Sigmoid colon (tissue), 7 donors: ENCODE measurements at regions of chr22 and their contacts with region 1.

Region 1: DNA sequence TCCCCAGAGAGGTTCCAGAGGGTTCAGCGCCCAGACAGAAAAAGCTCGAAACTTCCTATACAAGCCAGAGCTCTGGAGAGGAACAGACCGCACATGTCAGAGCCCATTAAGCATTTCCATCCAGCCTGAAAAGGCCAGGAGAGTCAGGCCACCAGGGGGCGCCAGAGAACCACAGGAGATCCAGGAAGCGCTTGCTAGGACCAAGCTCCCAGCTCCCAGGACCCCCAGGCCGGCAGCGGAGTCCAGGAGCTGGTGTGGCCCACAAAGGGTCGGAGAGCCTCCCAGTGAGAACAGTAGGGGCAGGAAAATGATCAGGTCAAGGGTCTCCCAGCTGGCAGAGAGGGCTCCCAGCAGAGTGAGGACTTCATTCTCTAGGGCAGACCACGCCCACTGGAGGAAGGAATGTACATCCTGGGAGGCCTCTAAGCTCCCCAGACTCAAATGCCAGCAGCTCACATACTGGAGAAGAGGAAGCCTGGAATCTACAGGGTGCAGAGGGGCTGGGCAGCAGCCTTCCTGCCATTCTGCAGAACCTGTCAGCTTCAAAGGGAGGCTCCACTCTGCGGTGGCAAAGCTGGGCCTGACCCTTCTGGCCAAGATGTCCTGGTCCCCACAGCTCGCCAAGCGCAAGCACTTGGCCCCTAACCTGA is 2.1 kb upstream of the MEI1 start:
- DNase-seq: peak; percentile 95
- H3K4me3 ChIP-seq: peak overlapping the region in 2 of 4 donors; percentile 28 to 31
- H3K27ac ChIP-seq: peak overlapping the region; percentile 4 to 60 (median 37)
- H3K4me1 ChIP-seq: peaks cover 0 to 20% (median 17%) of the 10 kb centered on the region in 4 donors
- H3K27me3 ChIP-seq: no peaks in the 10 kb centered on the region
- CTCF ChIP-seq: peak; percentile 85 to 99 (median 96)
- EP300 ChIP-seq: no peak
- POLR2A ChIP-seq: no peak

Region 2: DNA sequence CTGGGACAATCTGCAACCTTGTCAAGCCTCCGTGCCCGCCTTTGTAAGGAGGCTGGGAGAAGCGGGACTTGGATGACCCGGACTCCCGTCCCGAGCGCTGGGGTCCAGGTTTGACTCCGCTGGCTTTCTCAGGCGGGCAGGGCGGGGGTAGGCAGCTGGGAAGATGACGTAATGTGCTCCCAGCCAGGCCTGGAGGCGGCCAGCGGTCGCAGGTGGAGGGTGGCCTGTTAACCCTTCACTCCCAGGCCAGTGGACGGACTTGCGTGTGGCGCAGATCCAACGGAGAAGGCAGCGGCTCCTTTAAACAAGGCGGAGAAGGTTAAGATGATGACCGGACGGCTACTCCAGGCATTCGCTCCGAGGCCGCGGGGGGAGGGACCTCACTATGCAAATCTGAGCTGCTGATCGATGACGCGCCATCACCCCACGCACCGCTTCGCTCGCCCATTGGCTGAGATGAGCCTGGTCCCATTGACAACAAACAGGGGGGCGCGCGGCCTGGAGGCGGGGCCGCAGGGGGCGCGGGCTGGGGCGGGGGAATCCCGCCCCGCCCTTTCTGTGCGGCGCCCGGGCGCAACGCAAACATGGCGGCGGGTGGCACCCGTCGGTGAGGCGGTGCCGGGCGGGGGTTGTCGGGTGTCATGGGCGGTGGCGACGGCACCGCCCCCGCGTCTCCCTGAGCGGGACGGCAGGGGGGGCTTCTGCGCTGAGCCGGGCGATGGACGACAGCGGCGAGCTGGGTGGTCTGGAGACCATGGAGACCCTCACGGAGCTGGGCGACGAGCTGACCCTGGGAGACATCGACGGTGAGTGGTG is 135.5 kb after region 1 on chr22 and contains the start of gene SREBF2:
- intact Hi-C with region 1: loop called (anchors 5 kb)
- DNase-seq: peak; percentile 100
- H3K4me3 ChIP-seq: peak within 1 kb of the TSS; percentile 70 to 98 (median 95)
- H3K27ac ChIP-seq: peak within 1 kb of the TSS; percentile 90 to 97 (median 92)
- H3K4me1 ChIP-seq: peaks cover 0 to 26% (median 17%) of the 10 kb centered on the region in 4 donors
- H3K27me3 ChIP-seq: no peaks in the 10 kb centered on the region
- CTCF ChIP-seq: no peak
- EP300 ChIP-seq: peak in 1 of 4 donors; percentile 82
- POLR2A ChIP-seq: peak; percentile 30 to 73
- total RNA-seq, gene SREBF2: 25.2 to 51.0 (median 33.4) TPM

Region 3: DNA sequence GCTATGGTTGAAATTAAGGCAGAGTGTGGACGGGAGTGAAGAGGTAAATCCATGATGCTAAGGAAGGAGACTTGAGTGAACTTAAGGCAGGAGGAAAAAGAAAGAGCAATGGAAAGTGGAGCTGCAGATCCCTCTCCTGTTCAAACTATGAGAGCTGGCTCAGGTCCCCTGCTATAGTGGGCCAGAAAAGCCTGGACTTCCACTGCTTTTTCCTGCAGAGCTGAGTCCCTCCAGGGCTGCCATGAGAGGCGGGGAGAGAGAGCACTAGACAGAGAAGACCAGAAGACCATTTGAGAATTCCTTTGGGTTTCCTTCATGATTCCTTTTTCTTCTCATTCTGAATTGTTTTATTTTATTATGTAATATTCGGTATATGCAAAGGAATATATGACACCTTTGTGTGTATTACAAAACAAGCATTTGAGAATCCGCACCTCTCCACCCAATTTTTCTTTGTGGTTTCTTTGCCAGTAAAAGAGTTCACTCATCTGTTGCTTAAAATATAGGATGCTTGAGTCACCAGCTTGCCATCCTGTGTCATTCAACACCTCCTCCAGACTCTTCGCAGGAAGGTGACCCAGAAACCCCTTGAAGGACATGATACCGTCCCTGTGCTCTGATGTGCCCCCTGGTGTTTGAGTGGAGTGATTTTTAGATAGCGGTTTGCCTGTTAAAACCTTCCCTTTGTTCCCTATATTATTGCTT is 160.1 kb after region 1 on chr22:
- intact Hi-C with region 1: loop called (anchors 5 kb)
- DNase-seq: no peak
- H3K4me3 ChIP-seq: no peak overlapping the region
- H3K27ac ChIP-seq: peak overlapping the region in 1 of 4 donors; percentile 41
- H3K4me1 ChIP-seq: peaks cover 0 to 26% (median 7%) of the 10 kb centered on the region in 4 donors
- H3K27me3 ChIP-seq: no peaks in the 10 kb centered on the region
- CTCF ChIP-seq: peak; percentile 20 to 50 (median 44)
- EP300 ChIP-seq: no peak
- POLR2A ChIP-seq: no peak

Region 4: DNA sequence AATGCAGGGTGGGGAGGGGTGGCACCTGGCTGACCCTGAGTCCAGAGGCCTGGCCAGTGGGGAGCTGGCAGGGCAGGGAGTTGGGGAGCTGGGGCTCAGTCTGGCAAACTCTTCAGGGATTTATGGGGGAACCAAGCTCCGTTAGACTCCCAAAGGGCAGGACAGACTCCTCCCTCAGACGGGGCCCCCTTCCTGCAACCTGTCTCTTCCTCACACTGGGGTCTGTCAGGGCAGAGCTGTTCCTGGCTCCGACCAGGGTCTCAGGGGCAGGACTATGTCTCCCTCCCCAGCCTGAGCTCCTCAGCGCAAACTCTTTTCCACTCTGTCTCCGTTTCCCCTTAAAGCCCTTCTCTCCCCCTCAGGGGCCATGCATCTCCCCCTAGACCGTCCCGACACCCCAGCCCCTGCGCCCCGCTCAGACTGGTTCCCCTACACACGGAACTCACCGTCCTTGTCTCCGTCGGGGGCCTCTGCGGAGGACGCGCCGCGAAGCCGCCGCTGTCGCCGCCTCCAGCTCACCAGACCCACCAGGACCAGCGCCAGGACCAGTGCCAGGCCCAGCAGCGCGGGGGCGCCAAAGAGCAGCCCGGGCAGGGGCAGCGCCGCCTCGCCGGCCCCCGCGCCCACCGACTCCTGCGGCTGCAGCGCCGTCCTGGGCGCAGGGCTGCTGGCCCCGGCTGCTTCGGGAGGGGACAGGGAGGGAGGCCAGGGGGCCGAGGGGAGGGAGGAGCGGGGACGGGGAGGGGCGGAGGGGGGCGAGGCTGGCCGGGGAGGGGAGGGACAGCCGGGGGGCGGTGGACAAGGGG is 228.6 kb after region 1 on chr22:
- intact Hi-C with region 1: no loop called
- DNase-seq: no peak
- H3K4me3 ChIP-seq: peak overlapping the region in 3 of 4 donors; percentile 30 to 47 (median 45)
- H3K27ac ChIP-seq: no peak overlapping the region
- H3K4me1 ChIP-seq: peaks cover 0 to 13% (median 12%) of the 10 kb centered on the region in 4 donors
- H3K27me3 ChIP-seq: peaks cover 13 to 27% (median 26%) of the 10 kb centered on the region in 3 donors
- CTCF ChIP-seq: peak in 3 of 4 experiments; percentile 8 to 63 (median 12)
- EP300 ChIP-seq: no peak
- POLR2A ChIP-seq: no peak

Region 5: DNA sequence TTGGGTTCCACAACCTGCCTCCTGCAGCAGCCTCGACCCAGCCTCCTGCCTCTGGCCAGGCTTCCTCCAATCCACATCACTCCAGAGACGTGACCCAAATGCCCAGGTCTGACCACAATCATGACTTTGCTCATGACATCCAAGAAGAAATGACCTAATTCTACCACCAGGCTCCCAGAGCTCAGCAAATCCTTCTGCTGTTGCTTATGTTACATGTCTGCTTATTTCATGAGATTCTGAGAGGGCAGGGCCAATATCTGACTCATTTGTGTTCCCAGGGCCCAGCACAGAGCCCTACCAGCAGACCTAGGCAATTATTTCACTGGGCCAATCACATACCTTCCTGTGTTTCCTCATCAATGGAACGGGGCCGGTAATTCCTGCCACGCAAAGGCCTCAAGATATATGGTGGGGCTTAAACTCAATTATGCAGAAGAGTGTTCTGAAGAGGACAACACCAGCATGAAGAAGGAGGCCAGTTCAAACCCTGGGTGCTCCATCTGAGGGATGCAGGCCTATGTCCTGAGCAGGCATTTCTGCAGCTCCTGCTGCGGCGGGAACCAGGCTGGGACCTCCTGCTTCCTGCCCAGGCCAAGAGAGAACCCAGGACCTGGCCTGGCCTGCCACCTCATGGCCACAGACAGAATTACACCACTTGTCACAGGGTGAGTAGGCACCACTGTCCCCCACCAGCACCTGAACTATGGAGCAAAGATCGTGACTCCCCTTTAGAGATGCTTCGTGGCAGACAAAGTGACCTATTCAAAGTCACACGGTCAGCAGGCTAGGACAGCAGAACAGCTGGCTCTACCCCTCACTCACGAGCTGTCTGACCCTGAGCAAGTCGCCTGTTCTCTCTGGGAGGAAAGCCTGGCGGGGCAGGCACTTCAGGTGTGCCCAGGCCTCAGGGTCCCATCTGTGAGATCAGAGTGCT is 243.8 kb after region 1 on chr22:
- intact Hi-C with region 1: loop called (anchors 1 kb)
- DNase-seq: peak; percentile 91
- H3K4me3 ChIP-seq: no peak overlapping the region
- H3K27ac ChIP-seq: peak overlapping the region; percentile 20 to 67 (median 42)
- H3K4me1 ChIP-seq: peaks cover 0 to 22% (median 17%) of the 10 kb centered on the region in 4 donors
- H3K27me3 ChIP-seq: no peaks in the 10 kb centered on the region
- CTCF ChIP-seq: peak; percentile 90 to 98 (median 94)
- EP300 ChIP-seq: no peak
- POLR2A ChIP-seq: no peak